Motor neuron (in vitro differentiated cells): ENCODE measurements at regions of chr14 and their contacts with region 1.

Region 1: GRCh38 chr14:93939304-93940229 is 12.4 kb downstream of the FAM181A start:
- ATAC-seq: peak; percentile 55 to 98 (median 88)
- H3K4me3 ChIP-seq: peak overlapping the region; percentile 14 to 30 (median 23)
- H3K27ac ChIP-seq: no peak overlapping the region
- H3K4me1 ChIP-seq: peaks cover 16 to 24% of the 10 kb centered on the region in 2 donors

Region 2: GRCh38 chr14:93994919-93995682 is 55.5 kb after region 1 on chr14:
- in situ Hi-C with region 1: loop called in 1 of 9 experiments (anchors 10 kb)
- ATAC-seq: peak; percentile 8 to 86 (median 66)
- H3K4me3 ChIP-seq: no peak overlapping the region
- H3K27ac ChIP-seq: no peak overlapping the region
- H3K4me1 ChIP-seq: peaks cover 0 to 2% of the 10 kb centered on the region in 2 donors

Region 3: DNA sequence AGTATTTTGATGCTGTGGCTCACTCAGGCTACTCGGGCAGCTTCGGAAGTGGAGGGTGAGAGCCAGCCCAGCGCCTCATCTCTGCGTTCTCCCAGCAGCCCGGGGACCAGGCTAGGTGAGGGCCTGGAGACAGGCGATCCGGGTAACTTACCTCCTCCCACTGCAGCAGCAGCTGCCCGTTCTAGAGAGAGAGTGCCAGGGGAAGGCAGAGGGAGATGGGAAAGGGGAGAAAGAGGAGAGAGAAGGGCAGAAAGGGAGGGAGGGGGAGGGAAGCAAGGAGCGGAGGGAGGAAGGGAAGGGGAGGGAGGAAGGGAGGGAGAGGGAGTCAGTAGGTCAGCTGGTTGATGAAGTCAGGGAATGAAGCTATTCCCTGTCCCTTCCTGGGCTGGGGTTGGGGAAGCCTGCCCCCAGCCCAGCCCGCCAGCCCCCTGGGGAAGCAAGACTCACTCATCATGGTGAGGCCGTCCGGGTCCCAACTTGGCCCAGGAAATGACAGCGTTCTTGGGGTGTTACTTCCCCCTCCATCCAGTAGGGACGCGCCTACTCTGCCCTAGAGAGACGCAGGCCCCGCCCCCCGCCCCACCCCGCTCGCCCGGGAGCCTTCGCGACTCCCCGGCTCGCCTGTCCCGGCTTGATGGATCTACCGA is 189.7 kb after region 1 on chr14 and contains the start of gene IFI27L2:
- in situ Hi-C with region 1: loop called in 1 of 9 experiments (anchors 25 kb)
- ATAC-seq: peak; percentile 85 to 95 (median 92)
- H3K4me3 ChIP-seq: peak within 1 kb of the TSS; percentile 40 to 48 (median 40)
- H3K27ac ChIP-seq: peak within 1 kb of the TSS; percentile 73 to 81
- H3K4me1 ChIP-seq: peaks cover 11 to 12% of the 10 kb centered on the region in 2 donors
- total RNA-seq, gene IFI27L2: 48.8 to 239 (median 90.8) TPM